PC-9 (cell line): ENCODE measurements at regions of chr6 and their contacts with region 1.

Region 1: GRCh38 chr6:53020005-53020744 is 25.1 kb upstream of the GSTA4 start:
- DNase-seq: no peak
- H3K4me3 ChIP-seq: no peak overlapping the region
- H3K27ac ChIP-seq: no peak overlapping the region
- H3K4me1 ChIP-seq: peaks cover 8% of the 10 kb centered on the region
- H3K27me3 ChIP-seq: no peaks in the 10 kb centered on the region
- CTCF ChIP-seq: no peak

Region 2: GRCh38 chr6:52190409-52190808 is 829.8 kb before region 1 on chr6:
- CTCF ChIA-PET with region 1: interaction called, 10 read pairs
- POLR2A ChIA-PET with region 1: no interaction called
- intact Hi-C with region 1: no loop called
- DNase-seq: no peak
- H3K4me3 ChIP-seq: no peak overlapping the region
- H3K27ac ChIP-seq: no peak overlapping the region
- H3K4me1 ChIP-seq: no peaks in the 10 kb centered on the region
- H3K27me3 ChIP-seq: peaks cover 43% of the 10 kb centered on the region
- CTCF ChIP-seq: no peak